Heart right ventricle (tissue), 16 donors: ENCODE measurements at regions of chr4 and their contacts with region 1.

Region 1: GRCh38 chr4:87679449-87680169 is 29.5 kb downstream of the DMP1 start:
- DNase-seq: peak; percentile 55 to 68
- ATAC-seq: peak; percentile 71 to 89 (median 83)
- H3K4me3 ChIP-seq: peak overlapping the region in 2 of 10 donors; percentile 1 to 3
- H3K27ac ChIP-seq: peak overlapping the region in 6 of 10 donors; percentile 25 to 68 (median 50)
- H3K4me1 ChIP-seq: peaks cover 0 to 31% (median 19%) of the 10 kb centered on the region in 9 donors
- H3K27me3 ChIP-seq: no peaks in the 10 kb centered on the region
- CTCF ChIP-seq: peak; percentile 74 to 87 (median 78)

Region 2: GRCh38 chr4:87150498-87151261 is 528.9 kb before region 1 on chr4:
- intact Hi-C with region 1: no loop called
- DNase-seq: peak in 1 of 2 donors; percentile 67
- ATAC-seq: peak; percentile 62 to 86 (median 72)
- H3K4me3 ChIP-seq: no peak overlapping the region
- H3K27ac ChIP-seq: no peak overlapping the region
- H3K4me1 ChIP-seq: no peaks in the 10 kb centered on the region
- H3K27me3 ChIP-seq: no peaks in the 10 kb centered on the region
- CTCF ChIP-seq: peak; percentile 70 to 96 (median 90)

Region 3: GRCh38 chr4:87543835-87544461 is 135.7 kb before region 1 on chr4:
- intact Hi-C with region 1: loop called in 8 of 10 experiments (anchors 2 to 10 kb)
- DNase-seq: peak in 1 of 2 donors; percentile 48
- ATAC-seq: peak in 7 of 8 donors; percentile 46 to 77 (median 65)
- H3K4me3 ChIP-seq: no peak overlapping the region
- H3K27ac ChIP-seq: peak overlapping the region in 3 of 10 donors; percentile 15 to 77 (median 20)
- H3K4me1 ChIP-seq: peaks cover 0 to 32% (median 5%) of the 10 kb centered on the region in 9 donors
- H3K27me3 ChIP-seq: no peaks in the 10 kb centered on the region
- CTCF ChIP-seq: peak in 8 of 9 donors; percentile 44 to 83 (median 65)

Region 4: GRCh38 chr4:87716371-87717265 is 37.0 kb after region 1 on chr4:
- intact Hi-C with region 1: loop called in 2 of 10 experiments (anchors 2 to 5 kb)
- DNase-seq: peak in 1 of 2 donors; percentile 84
- ATAC-seq: peak; percentile 81 to 94 (median 89)
- H3K4me3 ChIP-seq: no peak overlapping the region
- H3K27ac ChIP-seq: peak overlapping the region; percentile 57 to 89 (median 77)
- H3K4me1 ChIP-seq: peaks cover 0 to 29% (median 16%) of the 10 kb centered on the region in 9 donors
- H3K27me3 ChIP-seq: no peaks in the 10 kb centered on the region
- CTCF ChIP-seq: no peak

Region 5: GRCh38 chr4:87961993-87962392 is 282.4 kb after region 1 on chr4:
- intact Hi-C with region 1: loop called in 1 of 10 experiments (anchors 10 kb)
- DNase-seq: no peak
- ATAC-seq: no peak
- H3K4me3 ChIP-seq: no peak overlapping the region
- H3K27ac ChIP-seq: no peak overlapping the region
- H3K4me1 ChIP-seq: no peaks in the 10 kb centered on the region
- H3K27me3 ChIP-seq: no peaks in the 10 kb centered on the region
- CTCF ChIP-seq: no peak

Region 6: DNA sequence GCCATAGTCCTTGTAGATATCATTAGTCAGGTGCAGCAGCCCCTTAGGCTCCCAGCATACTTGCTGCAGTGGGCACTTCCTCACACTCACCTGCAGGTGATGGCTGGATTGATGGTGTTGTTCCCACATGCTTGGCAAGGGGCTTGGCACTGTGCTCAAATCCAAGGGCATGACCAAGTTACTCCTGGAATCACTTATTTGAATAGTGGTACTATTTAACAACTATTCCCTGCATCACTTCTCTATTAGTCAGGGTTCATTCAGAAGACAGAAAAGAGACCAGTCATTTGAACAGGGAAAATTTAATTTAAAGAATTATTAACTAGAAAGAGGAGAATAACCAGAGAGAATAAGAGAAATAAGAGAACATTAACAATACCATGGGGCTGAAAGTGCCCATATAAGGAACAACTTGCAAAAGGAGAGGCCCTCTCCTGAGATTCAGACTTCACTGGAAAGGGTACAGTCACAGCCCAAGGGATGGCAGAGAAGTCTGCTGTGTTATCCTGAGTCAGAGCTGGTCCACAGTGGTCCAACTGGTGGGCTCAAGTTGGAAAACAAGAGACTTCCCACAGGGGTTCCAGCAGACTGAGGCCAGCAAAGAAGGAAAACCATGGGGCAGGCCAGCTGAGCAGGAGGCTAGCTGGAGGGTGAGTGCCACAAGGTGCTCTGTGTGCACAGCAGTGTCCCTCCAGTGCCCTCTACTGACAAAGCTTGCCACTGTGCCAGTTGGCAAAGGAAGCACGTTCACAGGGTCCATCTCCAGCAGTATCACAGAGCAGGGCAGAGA is 305.7 kb after region 1 on chr4:
- intact Hi-C with region 1: loop called in 1 of 10 experiments (anchors 10 kb)
- DNase-seq: peak; percentile 38 to 55
- ATAC-seq: peak; percentile 61 to 98 (median 88)
- H3K4me3 ChIP-seq: no peak overlapping the region
- H3K27ac ChIP-seq: no peak overlapping the region
- H3K4me1 ChIP-seq: no peaks in the 10 kb centered on the region
- H3K27me3 ChIP-seq: peaks cover 0 to 13% (median 0%) of the 10 kb centered on the region in 7 donors
- CTCF ChIP-seq: peak in 7 of 9 donors; percentile 38 to 69 (median 59)

Region 7: GRCh38 chr4:88211473-88212252 is 532.1 kb after region 1 on chr4:
- intact Hi-C with region 1: loop called in 3 of 10 experiments (anchors 10 kb)
- DNase-seq: peak in 1 of 2 donors; percentile 56
- ATAC-seq: peak in 7 of 8 donors; percentile 38 to 77 (median 70)
- H3K4me3 ChIP-seq: no peak overlapping the region
- H3K27ac ChIP-seq: no peak overlapping the region
- H3K4me1 ChIP-seq: peaks cover 0 to 4% (median 0%) of the 10 kb centered on the region in 9 donors
- H3K27me3 ChIP-seq: no peaks in the 10 kb centered on the region
- CTCF ChIP-seq: peak; percentile 54 to 88 (median 76)